Sigmoid colon (tissue), 7 donors: ENCODE measurements at regions of chr16 and their contacts with region 1.

Region 1: DNA sequence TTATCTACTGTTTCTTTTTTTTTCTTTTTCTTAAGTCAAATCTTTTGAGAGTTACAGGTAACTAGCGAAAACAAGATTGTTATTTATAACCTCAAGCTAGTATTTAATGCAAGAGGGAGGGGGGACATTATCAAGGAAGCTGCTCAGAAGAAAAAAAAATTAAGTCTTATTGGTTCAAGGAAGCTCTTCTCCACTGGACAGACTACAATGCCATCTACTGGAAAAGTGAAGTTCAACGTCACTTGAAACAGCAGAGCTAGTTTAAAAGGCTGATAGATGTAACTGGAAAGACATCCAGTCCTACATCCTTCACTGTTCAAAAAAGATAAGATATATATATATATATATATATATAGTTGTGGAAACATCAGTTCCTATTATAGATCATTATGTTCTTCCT is 418.0 kb upstream of the PSMD7 start:
- DNase-seq: no peak
- H3K4me3 ChIP-seq: no peak overlapping the region
- H3K27ac ChIP-seq: no peak overlapping the region
- H3K4me1 ChIP-seq: no peaks in the 10 kb centered on the region
- H3K27me3 ChIP-seq: no peaks in the 10 kb centered on the region
- CTCF ChIP-seq: peak in 3 of 4 experiments; percentile 29 to 62 (median 51)
- EP300 ChIP-seq: no peak
- POLR2A ChIP-seq: no peak

Region 2: DNA sequence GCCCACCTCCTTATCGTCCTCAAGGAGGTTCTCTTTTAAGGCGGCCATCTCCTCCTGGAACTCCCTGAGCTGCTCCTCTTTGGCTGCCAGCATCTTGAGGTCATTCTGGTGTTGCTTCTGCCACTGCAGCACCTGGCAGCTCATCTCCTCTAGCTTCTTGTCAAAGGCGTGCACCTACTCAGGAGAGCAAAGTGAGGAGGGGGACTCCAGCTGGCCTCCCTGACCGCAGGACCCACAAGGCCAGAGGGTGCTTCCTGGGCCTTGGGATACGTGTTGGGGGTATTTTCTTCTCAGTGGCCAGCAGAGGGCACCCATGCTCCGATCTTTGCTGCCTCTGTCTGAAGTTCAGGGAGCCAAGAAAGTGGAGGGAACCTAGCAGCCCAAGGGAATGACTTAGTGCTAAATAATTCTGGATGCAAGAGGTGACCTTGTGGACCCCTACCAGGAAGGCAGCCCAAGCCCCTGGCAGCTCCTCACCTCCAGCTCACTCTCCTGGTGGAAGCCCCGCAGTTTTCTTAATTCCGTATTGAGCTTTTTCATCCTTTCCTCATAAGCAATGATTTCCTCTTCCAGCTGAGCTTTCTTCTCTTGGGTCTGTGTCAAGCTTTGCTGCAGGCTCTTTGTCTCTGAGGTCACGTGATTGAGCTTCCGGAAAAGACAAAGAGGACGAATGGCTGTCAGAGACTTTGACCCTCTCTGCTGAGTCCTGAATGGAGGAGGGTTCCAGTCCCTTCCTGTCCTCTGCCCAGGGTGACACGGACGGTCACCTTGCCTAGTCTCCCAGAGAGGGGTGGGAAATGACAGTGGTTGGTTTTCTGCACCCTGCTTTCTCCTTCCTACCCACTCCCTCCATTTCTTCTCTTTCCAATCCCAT is 1753.6 kb before region 1 on chr16:
- intact Hi-C with region 1: loop called (anchors 10 kb)
- DNase-seq: peak; percentile 81
- H3K4me3 ChIP-seq: no peak overlapping the region
- H3K27ac ChIP-seq: peak overlapping the region in 2 of 4 donors; percentile 8 to 42
- H3K4me1 ChIP-seq: no peaks in the 10 kb centered on the region
- H3K27me3 ChIP-seq: no peaks in the 10 kb centered on the region
- CTCF ChIP-seq: peak; percentile 47 to 65 (median 57)
- EP300 ChIP-seq: no peak
- POLR2A ChIP-seq: no peak

Region 3: DNA sequence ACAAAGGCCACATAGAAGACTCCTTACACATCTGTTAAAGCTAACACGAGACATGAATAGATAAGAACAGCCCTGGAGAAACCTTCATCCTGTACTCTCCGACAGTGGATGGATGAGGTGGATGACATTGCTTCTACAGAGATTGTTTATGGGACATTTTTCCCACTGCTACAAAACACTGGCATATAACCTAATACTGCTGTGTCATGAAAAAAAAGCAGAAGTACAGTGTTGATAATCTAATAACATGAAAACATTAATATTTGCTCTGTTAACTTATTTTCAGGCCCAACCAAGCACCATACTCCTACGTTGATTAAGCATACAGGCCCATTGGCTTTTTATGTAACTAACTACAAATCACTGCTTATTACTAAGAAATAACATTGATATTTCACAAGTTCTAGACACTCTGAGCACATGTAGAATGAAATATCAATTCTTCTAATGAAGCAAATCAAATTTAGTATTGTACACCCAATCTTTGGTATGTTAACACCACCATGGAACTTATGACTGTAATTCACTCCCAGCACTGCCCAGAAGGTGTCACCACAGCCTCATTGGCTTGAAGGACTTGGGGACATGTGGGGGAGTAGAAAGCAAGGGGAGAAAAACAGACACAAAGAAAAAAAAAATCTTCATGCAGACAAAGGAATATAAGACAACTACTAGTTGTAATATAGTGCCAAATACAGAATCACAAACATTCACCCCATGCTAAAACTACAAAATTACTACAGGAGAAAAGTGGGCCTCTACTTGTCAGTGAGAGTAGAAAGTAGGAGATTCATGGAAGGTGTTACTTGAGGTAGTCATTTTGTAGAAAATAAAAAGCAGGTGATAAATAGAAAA is 1376.6 kb before region 1 on chr16:
- intact Hi-C with region 1: loop called (anchors 5 kb)
- DNase-seq: no peak
- H3K4me3 ChIP-seq: no peak overlapping the region
- H3K27ac ChIP-seq: no peak overlapping the region
- H3K4me1 ChIP-seq: no peaks in the 10 kb centered on the region
- H3K27me3 ChIP-seq: no peaks in the 10 kb centered on the region
- CTCF ChIP-seq: peak; percentile 14 to 71 (median 45)
- EP300 ChIP-seq: no peak
- POLR2A ChIP-seq: no peak

Region 4: DNA sequence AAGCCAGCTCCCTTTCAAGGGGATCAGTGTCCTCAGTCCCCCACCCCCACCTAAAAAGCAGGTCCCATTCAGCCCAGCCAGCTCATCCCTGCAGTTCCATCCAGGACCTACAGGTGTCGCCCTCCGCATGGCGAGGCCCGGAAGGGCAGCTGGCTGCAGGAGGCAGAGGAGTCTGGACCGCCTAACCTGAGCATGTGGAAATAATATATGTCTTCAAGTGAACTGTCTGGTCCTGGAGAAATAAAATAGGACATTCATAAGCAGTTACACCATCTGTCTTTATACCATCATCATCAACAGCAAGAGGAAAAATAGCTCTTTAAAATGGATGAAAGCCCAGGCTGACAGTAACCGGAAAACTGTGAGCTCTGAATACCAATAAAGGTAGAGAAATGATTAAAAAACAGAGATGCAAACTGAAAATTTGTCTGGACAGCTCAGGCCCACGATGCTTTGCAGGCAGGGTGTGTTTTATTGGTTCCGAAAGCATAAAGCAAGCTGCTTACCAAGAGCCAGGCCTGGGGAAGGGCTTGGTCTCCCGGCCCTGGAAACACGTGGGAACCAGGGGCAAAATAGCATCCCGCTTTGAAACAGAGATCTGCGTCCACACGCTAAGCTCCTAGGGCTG is 1045.9 kb before region 1 on chr16:
- intact Hi-C with region 1: loop called (anchors 5 kb)
- DNase-seq: peak; percentile 94
- H3K4me3 ChIP-seq: no peak overlapping the region
- H3K27ac ChIP-seq: peak overlapping the region; percentile 15 to 62 (median 46)
- H3K4me1 ChIP-seq: peaks cover 0 to 50% (median 38%) of the 10 kb centered on the region in 4 donors
- H3K27me3 ChIP-seq: no peaks in the 10 kb centered on the region
- CTCF ChIP-seq: peak; percentile 86 to 99 (median 88)
- EP300 ChIP-seq: no peak
- POLR2A ChIP-seq: no peak

Region 5: DNA sequence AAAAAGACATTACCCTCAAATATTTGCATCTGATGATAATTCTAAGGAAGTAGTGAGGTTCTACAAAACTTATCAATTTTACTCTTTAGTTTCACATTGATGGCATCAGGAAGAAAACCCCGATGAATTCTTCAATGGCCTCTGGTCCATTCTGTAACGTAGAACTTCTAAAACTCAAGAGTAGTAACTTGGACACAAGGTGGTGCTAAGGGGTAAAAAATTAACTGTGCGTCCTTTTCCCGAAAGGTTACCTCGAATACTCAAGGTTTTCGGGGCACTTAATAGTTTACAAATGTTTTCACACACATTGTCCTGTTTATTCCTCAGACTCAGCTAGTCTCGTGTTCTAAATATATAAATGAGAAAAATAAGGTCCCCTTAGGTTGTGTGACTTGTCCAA is 313.3 kb before region 1 on chr16:
- intact Hi-C with region 1: loop called (anchors 10 kb)
- DNase-seq: no peak
- H3K4me3 ChIP-seq: no peak overlapping the region
- H3K27ac ChIP-seq: no peak overlapping the region
- H3K4me1 ChIP-seq: no peaks in the 10 kb centered on the region
- H3K27me3 ChIP-seq: no peaks in the 10 kb centered on the region
- CTCF ChIP-seq: peak in 1 of 4 experiments; percentile 19
- EP300 ChIP-seq: no peak
- POLR2A ChIP-seq: no peak

Region 6: GRCh38 chr16:73956587-73957494 is 78.2 kb after region 1 on chr16:
- intact Hi-C with region 1: no loop called
- DNase-seq: peak; percentile 73
- H3K4me3 ChIP-seq: peak overlapping the region in 2 of 4 donors; percentile 13 to 15
- H3K27ac ChIP-seq: no peak overlapping the region
- H3K4me1 ChIP-seq: peaks cover 0 to 11% (median 4%) of the 10 kb centered on the region in 4 donors
- H3K27me3 ChIP-seq: peaks cover 0 to under 1% (median 0%) of the 10 kb centered on the region in 3 donors
- CTCF ChIP-seq: peak in 3 of 4 experiments; percentile 61 to 83 (median 65)
- EP300 ChIP-seq: no peak
- POLR2A ChIP-seq: no peak

Region 7: GRCh38 chr16:73996624-73997339 is 118.2 kb after region 1 on chr16:
- intact Hi-C with region 1: no loop called
- DNase-seq: no peak
- H3K4me3 ChIP-seq: no peak overlapping the region
- H3K27ac ChIP-seq: no peak overlapping the region
- H3K4me1 ChIP-seq: no peaks in the 10 kb centered on the region
- H3K27me3 ChIP-seq: no peaks in the 10 kb centered on the region
- CTCF ChIP-seq: no peak
- EP300 ChIP-seq: no peak
- POLR2A ChIP-seq: no peak